GM10248 (cell line): ENCODE measurements at regions of chr16 and their contacts with region 1.

Region 1: DNA sequence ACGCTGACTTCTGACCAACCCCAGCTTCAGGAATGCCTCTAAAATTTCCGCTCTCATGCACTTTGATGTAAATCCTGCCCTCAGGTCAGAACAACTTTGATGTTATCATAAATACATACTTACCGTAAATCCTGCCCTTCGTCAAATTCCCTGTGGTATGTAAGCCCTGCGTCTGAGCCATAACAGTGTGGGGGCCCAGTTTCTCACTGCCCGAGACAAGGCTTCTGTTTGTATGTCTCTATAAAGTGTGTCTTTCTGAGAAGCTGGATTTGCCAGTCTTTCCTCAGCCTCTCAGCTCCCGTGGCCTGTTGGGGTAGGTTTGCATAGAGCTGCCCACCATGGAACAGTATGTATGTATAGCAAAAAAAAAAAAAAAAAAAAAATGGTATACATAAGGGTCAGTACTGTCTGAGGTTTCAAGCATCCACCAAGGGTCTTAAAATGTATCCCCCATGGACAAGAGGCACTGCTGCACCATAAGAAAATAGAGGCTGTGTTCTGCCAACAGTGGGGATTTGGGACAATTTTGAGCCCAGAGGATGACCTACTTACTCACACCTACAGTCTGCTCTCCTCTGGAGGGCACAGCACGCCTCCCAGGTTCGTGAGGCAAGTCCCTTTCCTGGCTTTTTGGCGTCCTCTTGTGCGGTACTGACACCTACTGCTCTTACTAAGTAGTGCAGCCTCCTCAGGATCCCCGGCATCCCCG is 17.5 kb downstream of the PRMT7 start:
- DNase-seq: peak; percentile 86
- CTCF ChIP-seq: peak; percentile 90

Region 2: GRCh38 chr16:68244903-68245853 is 83.1 kb before region 1 on chr16 and contains the start of gene PLA2G15:
- CTCF ChIA-PET with region 1: interaction called, 619 read pairs
- POLR2A ChIA-PET with region 1: no interaction called
- DNase-seq: peak; percentile 98
- CTCF ChIP-seq: no peak

Region 3: DNA sequence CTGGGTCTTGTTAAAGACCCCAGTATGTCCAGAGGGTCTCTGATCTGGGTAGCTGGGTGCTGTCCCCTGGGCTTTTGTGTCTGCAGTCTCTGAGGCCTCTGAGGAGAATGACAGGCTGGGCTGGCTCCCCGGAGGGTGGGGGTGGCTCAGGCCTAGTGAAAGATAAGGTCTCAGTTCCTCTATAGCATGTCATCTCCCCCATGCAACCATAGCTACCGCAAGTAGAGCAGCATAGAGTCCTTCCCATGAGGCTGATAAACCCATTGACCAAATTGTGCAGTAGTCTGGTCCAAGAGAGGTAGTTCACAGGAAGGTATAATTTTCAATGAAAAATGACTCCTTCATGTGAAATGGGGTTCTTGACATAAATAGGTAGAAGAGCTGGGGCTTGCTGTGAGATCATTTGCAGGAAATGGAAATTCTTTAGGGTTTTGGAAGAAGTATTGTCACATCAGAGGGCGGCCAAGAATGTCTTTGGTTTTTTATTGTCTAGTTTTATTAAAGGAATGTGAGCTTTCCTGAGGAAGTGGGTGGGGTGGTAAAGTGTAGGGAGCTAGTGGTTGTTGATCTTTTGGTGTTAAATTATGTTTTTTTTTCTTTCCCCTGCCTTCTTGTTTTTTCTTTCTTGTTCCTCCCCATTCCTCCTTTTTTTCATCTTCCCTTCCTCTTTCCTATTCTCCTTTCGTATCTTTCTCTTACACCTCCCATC is 38.5 kb before region 1 on chr16:
- CTCF ChIA-PET with region 1: interaction called, 37 read pairs
- POLR2A ChIA-PET with region 1: no interaction called
- DNase-seq: peak; percentile 85
- CTCF ChIP-seq: no peak

Region 4: GRCh38 chr16:68310761-68311511 is 17.4 kb before region 1 on chr16 and contains the starts of genes PRMT7 and SLC7A6OS:
- CTCF ChIA-PET with region 1: interaction called, 20 read pairs
- POLR2A ChIA-PET with region 1: no interaction called
- DNase-seq: peak; percentile 98
- CTCF ChIP-seq: no peak

Region 5: GRCh38 chr16:68356249-68356918 is 28.1 kb after region 1 on chr16:
- CTCF ChIA-PET with region 1: interaction called, 10 read pairs
- POLR2A ChIA-PET with region 1: no interaction called
- DNase-seq: peak; percentile 87
- CTCF ChIP-seq: no peak